Breast epithelium (tissue), 4 donors: ENCODE measurements at regions of chr11 and their contacts with region 1.

Region 1: GRCh38 chr11:75142714-75143419 is 8.0 kb upstream of the SLCO2B1 start:
- DNase-seq: peak in 1 of 2 donors; percentile 35
- H3K4me3 ChIP-seq: no peak overlapping the region
- H3K27ac ChIP-seq: peak overlapping the region in 1 of 2 donors; percentile 48
- H3K4me1 ChIP-seq: no peaks in the 10 kb centered on the region
- H3K27me3 ChIP-seq: no peaks in the 10 kb centered on the region
- CTCF ChIP-seq: no peak
- POLR2A ChIP-seq: no peak

Region 2: GRCh38 chr11:75100314-75100713 is 42.6 kb before region 1 on chr11:
- intact Hi-C with region 1: no loop called
- DNase-seq: no peak
- H3K4me3 ChIP-seq: no peak overlapping the region
- H3K27ac ChIP-seq: no peak overlapping the region
- H3K4me1 ChIP-seq: no peaks in the 10 kb centered on the region
- H3K27me3 ChIP-seq: no peaks in the 10 kb centered on the region
- CTCF ChIP-seq: no peak
- POLR2A ChIP-seq: no peak

Region 3: DNA sequence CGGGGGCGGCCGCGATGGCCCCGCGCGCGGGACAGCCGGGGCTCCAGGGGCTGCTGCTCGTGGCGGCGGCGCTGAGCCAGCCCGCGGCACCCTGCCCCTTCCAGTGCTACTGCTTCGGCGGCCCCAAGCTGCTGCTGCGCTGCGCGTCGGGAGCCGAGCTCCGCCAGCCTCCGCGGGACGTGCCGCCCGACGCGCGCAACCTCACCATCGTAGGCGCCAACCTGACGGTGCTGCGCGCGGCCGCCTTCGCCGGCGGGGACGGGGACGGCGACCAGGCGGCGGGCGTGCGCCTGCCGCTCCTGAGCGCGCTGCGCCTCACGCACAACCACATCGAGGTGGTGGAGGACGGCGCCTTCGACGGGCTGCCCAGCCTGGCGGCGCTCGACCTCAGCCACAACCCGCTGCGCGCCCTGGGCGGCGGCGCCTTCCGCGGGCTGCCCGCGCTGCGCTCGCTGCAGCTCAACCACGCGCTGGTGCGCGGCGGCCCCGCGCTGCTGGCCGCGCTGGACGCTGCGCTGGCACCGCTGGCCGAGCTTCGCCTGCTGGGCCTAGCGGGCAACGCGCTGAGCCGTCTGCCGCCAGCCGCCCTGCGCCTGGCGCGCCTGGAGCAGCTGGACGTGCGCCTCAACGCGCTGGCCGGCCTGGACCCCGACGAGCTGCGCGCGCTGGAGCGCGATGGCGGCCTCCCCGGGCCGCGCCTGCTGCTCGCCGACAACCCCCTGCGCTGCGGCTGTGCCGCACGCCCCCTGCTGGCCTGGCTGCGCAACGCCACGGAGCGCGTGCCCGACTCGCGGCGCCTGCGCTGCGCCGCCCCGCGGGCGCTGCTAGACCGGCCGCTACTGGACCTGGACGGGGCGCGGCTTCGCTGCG is 98.4 kb after region 1 on chr11:
- intact Hi-C with region 1: loop called (anchors 10 kb)
- DNase-seq: peak; percentile 61 to 76
- H3K4me3 ChIP-seq: peak overlapping the region; percentile 25 to 77 (median 53)
- H3K27ac ChIP-seq: no peak overlapping the region
- H3K4me1 ChIP-seq: peaks cover 0 to 4% of the 10 kb centered on the region in 2 donors
- H3K27me3 ChIP-seq: peaks cover 0 to 12% of the 10 kb centered on the region in 2 donors
- CTCF ChIP-seq: peak in 1 of 3 donors; percentile 95
- POLR2A ChIP-seq: no peak